ENCODE measurements at regions of chr17 and their contacts with region 1.

Region 1: GRCh38 chr17:4565209-4566141 is 5.1 kb upstream of the GGT6 start:
- DNase-seq: peak; percentile 70
- H3K4me3 ChIP-seq: no peak overlapping the region
- H3K27ac ChIP-seq: no peak overlapping the region
- H3K4me1 ChIP-seq: no peaks in the 10 kb centered on the region
- H3K27me3 ChIP-seq: peaks cover 0 to 1% of the 10 kb centered on the region in 2 experiments
- CTCF ChIP-seq: peak; percentile 82 to 84
- POLR2A ChIP-seq: no peak

Region 2: GRCh38 chr17:4498461-4499397 is 66.7 kb before region 1 on chr17 and contains the start of gene SPNS2:
- CTCF ChIA-PET with region 1: interaction called, 17 read pairs
- POLR2A ChIA-PET with region 1: no interaction called
- dilution Hi-C with region 1: no loop called
- intact Hi-C with region 1: no loop called
- DNase-seq: peak; percentile 64
- H3K4me3 ChIP-seq: peak within 1 kb of the TSS; percentile 19 to 84 (median 50)
- H3K27ac ChIP-seq: peak within 1 kb of the TSS; percentile 12
- H3K4me1 ChIP-seq: peaks cover 22% of the 10 kb centered on the region
- H3K27me3 ChIP-seq: no peaks in the 10 kb centered on the region
- CTCF ChIP-seq: no peak
- POLR2A ChIP-seq: peak; percentile 52
- total RNA-seq, gene SPNS2: 56.6 and 77.3 TPM in 2 replicates

Region 3: GRCh38 chr17:4576729-4577322 is 11.4 kb after region 1 on chr17:
- CTCF ChIA-PET with region 1: interaction called, 41 read pairs
- POLR2A ChIA-PET with region 1: no interaction called
- dilution Hi-C with region 1: no loop called
- intact Hi-C with region 1: no loop called
- DNase-seq: no peak
- H3K4me3 ChIP-seq: no peak overlapping the region
- H3K27ac ChIP-seq: no peak overlapping the region
- H3K4me1 ChIP-seq: no peaks in the 10 kb centered on the region
- H3K27me3 ChIP-seq: peaks cover 0 to 4% of the 10 kb centered on the region in 2 experiments
- CTCF ChIP-seq: no peak
- POLR2A ChIP-seq: no peak

Region 4: DNA sequence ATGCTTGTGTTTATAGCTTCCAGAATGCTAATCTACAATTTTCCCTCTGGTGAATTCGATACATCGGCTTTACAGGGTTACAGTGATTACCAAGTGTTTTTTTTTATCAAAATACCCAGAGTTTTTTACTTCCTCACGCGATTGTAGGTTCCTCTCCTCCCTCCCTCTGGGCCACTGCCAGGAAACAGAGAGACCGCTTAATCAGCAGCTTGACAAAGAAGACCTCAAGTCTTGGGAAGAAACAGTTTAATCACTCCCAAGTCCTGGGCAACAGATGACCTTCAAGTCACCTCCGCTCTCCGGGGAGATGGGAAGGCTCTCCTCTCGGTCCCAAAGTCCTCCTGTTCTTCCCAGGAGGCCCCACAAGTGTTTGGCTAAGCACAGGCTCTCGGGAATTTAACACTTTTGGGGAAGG is 42.3 kb after region 1 on chr17:
- CTCF ChIA-PET with region 1: interaction called, 32 read pairs
- POLR2A ChIA-PET with region 1: no interaction called
- dilution Hi-C with region 1: no loop called
- intact Hi-C with region 1: no loop called
- DNase-seq: peak; percentile 66
- H3K4me3 ChIP-seq: no peak overlapping the region
- H3K27ac ChIP-seq: no peak overlapping the region
- H3K4me1 ChIP-seq: peaks cover 4% of the 10 kb centered on the region
- H3K27me3 ChIP-seq: peaks cover 8 to 13% of the 10 kb centered on the region in 2 experiments
- CTCF ChIP-seq: no peak
- POLR2A ChIP-seq: no peak

Region 5: DNA sequence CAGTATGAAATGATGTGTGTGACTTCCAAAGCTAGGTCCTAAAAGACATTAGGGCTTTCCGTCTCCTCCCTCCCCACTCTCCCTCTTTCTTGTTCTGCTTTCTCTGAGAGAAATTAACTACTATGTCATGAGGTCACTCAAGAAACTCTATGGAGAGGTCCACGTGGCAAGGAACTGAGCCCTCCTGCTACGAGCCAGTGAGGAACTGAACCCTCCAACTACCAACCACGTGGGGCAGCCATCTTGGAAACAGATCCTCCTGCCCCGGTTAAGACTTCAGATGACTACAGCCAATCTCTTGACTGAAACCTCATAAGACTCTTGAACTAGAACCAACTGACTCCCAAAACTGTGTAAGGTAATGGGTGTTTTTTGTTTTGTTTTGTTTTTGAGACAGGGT is 80.2 kb after region 1 on chr17:
- CTCF ChIA-PET with region 1: interaction called, 11 read pairs
- POLR2A ChIA-PET with region 1: no interaction called
- dilution Hi-C with region 1: no loop called
- intact Hi-C with region 1: no loop called
- DNase-seq: no peak
- H3K4me3 ChIP-seq: no peak overlapping the region
- H3K27ac ChIP-seq: no peak overlapping the region
- H3K4me1 ChIP-seq: no peaks in the 10 kb centered on the region
- H3K27me3 ChIP-seq: peaks cover 30 to 33% of the 10 kb centered on the region in 2 experiments
- CTCF ChIP-seq: no peak
- POLR2A ChIP-seq: no peak

Measured in endothelial cell of umbilical vein (primary cell).